Naive thymus-derived CD4-positive, alpha-beta T cell (primary cell): ENCODE measurements at regions of chr1 and their contacts with region 1.

Region 1: DNA sequence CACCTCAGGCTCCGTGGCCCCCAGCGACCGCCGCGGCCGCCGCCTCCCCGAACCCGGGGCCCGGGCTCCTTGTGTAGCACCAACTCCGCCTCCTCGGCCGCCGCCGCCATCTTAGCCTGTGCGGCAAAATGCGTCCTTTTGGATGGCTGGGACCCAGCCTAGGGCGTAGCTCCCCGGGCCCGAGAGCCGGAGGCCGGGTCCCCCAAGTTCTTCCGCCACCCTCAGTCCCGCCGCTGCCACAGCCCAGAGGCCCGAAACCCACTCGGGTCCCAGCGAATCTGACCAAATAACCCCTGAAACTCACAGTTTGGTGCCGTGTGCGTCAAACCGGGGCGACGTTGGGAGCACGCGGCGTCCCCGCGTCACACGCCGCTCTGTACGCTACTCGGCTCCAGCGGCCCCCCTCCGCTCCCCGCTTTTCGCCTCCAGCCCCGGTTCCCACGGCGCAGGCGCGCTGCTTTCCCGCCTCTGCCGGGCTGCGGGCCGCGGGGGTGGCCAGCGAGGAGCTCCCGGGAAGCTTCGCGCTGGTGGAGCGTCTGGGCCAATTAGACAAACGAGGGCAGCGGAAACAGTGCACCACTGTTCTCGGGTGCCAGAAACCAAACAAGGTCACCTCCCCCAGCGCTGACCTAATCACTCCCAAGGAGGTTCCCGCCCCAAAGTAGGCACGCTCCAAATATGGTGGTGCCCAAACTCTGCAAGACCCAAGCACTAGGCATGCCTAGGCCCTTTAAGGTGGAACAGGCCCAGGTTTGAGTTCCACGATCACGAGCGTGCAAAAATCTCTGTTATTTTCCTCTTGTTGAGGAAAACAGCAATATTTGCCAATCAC is at the start of gene ZNF644:
- DNase-seq: peak; percentile 81 to 95 (median 93)
- ATAC-seq: peak; percentile 91
- H3K4me3 ChIP-seq: peak within 1 kb of the TSS; percentile 62
- H3K4me3 Mint-ChIP-seq: peak within 1 kb of the TSS; percentile 90 to 97 (median 96)
- H3K27ac ChIP-seq: peak within 1 kb of the TSS; percentile 99
- H3K27ac Mint-ChIP-seq: peak within 1 kb of the TSS; percentile 95 to 100 (median 98)
- H3K4me1 ChIP-seq: peaks cover 37 to 45% of the 10 kb centered on the region in 2 donors
- H3K4me1 Mint-ChIP-seq: peaks cover 37 to 83% (median 68%) of the 10 kb centered on the region in 7 donors
- H3K27me3 ChIP-seq: no peaks in the 10 kb centered on the region
- H3K27me3 Mint-ChIP-seq: peaks cover 0 to 2% (median 0%) of the 10 kb centered on the region in 5 donors
- total RNA-seq, gene ZNF644: 63.5 to 117 (median 85.2) TPM

Region 2: GRCh38 chr1:89994805-89995597 is 1026.9 kb before region 1 on chr1 and contains the start of gene ZNF326:
- CTCF ChIA-PET with region 1: no interaction called
- POLR2A ChIA-PET with region 1: no interaction called
- intact Hi-C with region 1: loop called in 1 of 2 experiments (anchors 1 kb)
- DNase-seq: peak; percentile 88 to 99 (median 93)
- ATAC-seq: peak; percentile 98
- H3K4me3 ChIP-seq: peak within 1 kb of the TSS; percentile 86
- H3K4me3 Mint-ChIP-seq: peak within 1 kb of the TSS; percentile 91 to 100 (median 99)
- H3K27ac ChIP-seq: peak within 1 kb of the TSS; percentile 85
- H3K27ac Mint-ChIP-seq: peak within 1 kb of the TSS; percentile 90 to 98 (median 96)
- H3K4me1 ChIP-seq: peaks cover 8 to 14% of the 10 kb centered on the region in 2 donors
- H3K4me1 Mint-ChIP-seq: peaks cover 28 to 47% (median 43%) of the 10 kb centered on the region in 7 donors
- H3K27me3 ChIP-seq: no peaks in the 10 kb centered on the region
- H3K27me3 Mint-ChIP-seq: peaks cover 0 to 7% (median 4%) of the 10 kb centered on the region in 5 donors
- total RNA-seq, gene ZNF326: 17.3 to 52.5 (median 23.5) TPM

Region 3: GRCh38 chr1:90850898-90851710 is 170.8 kb before region 1 on chr1:
- CTCF ChIA-PET with region 1: no interaction called
- POLR2A ChIA-PET with region 1: interaction called, 4 read pairs
- intact Hi-C with region 1: loop called (anchors 1 to 2 kb)
- DNase-seq: peak; percentile 38 to 78 (median 55)
- ATAC-seq: peak; percentile 97
- H3K4me3 ChIP-seq: peak overlapping the region; percentile 69
- H3K4me3 Mint-ChIP-seq: peak overlapping the region; percentile 78 to 87 (median 84)
- H3K27ac ChIP-seq: no peak overlapping the region
- H3K27ac Mint-ChIP-seq: no peak overlapping the region
- H3K4me1 ChIP-seq: peaks cover 4% of the 10 kb centered on the region in 2 donors
- H3K4me1 Mint-ChIP-seq: peaks cover 7 to 13% (median 10%) of the 10 kb centered on the region in 7 donors
- H3K27me3 ChIP-seq: peaks cover 0 to 9% of the 10 kb centered on the region in 2 donors
- H3K27me3 Mint-ChIP-seq: peaks cover 58 to 74% (median 68%) of the 10 kb centered on the region in 5 donors

Region 4: DNA sequence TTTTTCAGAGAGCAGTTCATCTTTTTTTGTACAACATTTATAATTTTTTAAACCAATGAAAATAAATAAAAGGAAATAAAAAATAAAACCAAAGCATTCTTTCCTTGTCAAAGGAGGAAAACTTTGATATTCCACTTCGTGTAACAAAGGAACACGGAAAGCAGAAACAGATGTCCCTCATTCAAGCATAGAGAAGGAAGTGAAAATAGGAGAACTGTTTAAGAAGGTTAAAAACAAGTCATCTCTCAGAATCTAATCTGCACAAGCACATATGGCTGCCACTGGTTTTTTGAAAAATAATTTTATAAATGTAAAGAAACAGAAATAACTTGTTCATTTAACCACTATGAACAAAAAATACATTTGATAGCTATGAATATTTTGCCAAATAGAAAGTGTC is 35.9 kb after region 1 on chr1:
- CTCF ChIA-PET with region 1: no interaction called
- POLR2A ChIA-PET with region 1: no interaction called
- intact Hi-C with region 1: no loop called
- DNase-seq: no peak
- ATAC-seq: no peak
- H3K4me3 ChIP-seq: no peak overlapping the region
- H3K4me3 Mint-ChIP-seq: no peak overlapping the region
- H3K27ac ChIP-seq: no peak overlapping the region
- H3K27ac Mint-ChIP-seq: no peak overlapping the region
- H3K4me1 ChIP-seq: peaks cover 0 to 9% of the 10 kb centered on the region in 2 donors
- H3K4me1 Mint-ChIP-seq: peaks cover 0 to 2% (median 0%) of the 10 kb centered on the region in 7 donors
- H3K27me3 ChIP-seq: no peaks in the 10 kb centered on the region
- H3K27me3 Mint-ChIP-seq: peaks cover 4 to 11% (median 5%) of the 10 kb centered on the region in 5 donors

Region 5: DNA sequence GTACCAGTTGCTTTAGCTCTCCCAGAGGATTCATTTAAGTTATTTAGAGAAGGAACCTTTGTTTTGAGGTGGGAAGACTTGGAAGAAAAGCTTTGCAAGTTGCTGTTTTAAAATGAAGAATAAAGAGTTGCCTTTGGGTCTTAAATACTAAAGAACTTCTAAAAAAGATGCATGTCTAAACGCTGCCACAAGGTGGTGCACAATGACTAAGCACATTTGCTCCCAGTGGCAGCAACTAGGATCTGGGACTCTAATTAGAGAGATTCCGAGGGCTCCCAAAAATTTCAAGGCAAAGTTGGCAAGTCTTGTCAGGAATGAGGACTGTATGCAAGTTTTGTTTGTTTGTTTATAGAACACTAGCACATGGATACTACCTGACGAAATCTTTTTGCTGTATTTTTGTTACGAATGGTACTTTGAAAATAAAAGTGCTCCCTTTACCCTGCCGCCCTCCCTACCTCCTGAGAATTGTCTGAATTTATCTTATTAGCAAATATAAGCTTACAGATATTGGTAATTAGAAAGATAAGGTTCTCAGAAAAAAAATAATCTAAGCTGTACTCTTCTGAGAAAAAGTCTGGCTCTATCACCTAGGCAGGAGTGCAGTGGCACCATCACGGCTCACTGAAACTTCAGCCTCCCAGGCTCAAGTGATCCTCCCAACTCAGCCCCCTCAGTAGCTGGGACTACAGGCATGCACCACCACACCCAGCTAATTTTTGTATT is 261.0 kb after region 1 on chr1:
- CTCF ChIA-PET with region 1: no interaction called
- POLR2A ChIA-PET with region 1: no interaction called
- intact Hi-C with region 1: no loop called
- DNase-seq: peak in 8 of 9 donors; percentile 2 to 34 (median 22)
- ATAC-seq: peak; percentile 60
- H3K4me3 ChIP-seq: no peak overlapping the region
- H3K4me3 Mint-ChIP-seq: no peak overlapping the region
- H3K27ac ChIP-seq: no peak overlapping the region
- H3K27ac Mint-ChIP-seq: no peak overlapping the region
- H3K4me1 ChIP-seq: no peaks in the 10 kb centered on the region
- H3K4me1 Mint-ChIP-seq: no peaks in the 10 kb centered on the region
- H3K27me3 ChIP-seq: no peaks in the 10 kb centered on the region
- H3K27me3 Mint-ChIP-seq: peaks cover 4 to 13% (median 7%) of the 10 kb centered on the region in 5 donors

Region 6: GRCh38 chr1:91500756-91501522 is 479.0 kb after region 1 on chr1 and contains the start of gene CDC7:
- CTCF ChIA-PET with region 1: no interaction called
- POLR2A ChIA-PET with region 1: no interaction called
- intact Hi-C with region 1: loop called in 1 of 2 experiments (anchors 1 kb)
- DNase-seq: peak; percentile 67 to 86 (median 79)
- ATAC-seq: peak; percentile 85
- H3K4me3 ChIP-seq: peak within 1 kb of the TSS; percentile 97
- H3K4me3 Mint-ChIP-seq: no peak within 1 kb of the TSS
- H3K27ac ChIP-seq: peak within 1 kb of the TSS; percentile 85
- H3K27ac Mint-ChIP-seq: no peak within 1 kb of the TSS
- H3K4me1 ChIP-seq: peaks cover 0 to 11% of the 10 kb centered on the region in 2 donors
- H3K4me1 Mint-ChIP-seq: peaks cover 14 to 34% (median 18%) of the 10 kb centered on the region in 7 donors
- H3K27me3 ChIP-seq: no peaks in the 10 kb centered on the region
- H3K27me3 Mint-ChIP-seq: no peaks in the 10 kb centered on the region
- total RNA-seq, gene CDC7: 5.3 to 17.9 (median 5.9) TPM

Region 7: DNA sequence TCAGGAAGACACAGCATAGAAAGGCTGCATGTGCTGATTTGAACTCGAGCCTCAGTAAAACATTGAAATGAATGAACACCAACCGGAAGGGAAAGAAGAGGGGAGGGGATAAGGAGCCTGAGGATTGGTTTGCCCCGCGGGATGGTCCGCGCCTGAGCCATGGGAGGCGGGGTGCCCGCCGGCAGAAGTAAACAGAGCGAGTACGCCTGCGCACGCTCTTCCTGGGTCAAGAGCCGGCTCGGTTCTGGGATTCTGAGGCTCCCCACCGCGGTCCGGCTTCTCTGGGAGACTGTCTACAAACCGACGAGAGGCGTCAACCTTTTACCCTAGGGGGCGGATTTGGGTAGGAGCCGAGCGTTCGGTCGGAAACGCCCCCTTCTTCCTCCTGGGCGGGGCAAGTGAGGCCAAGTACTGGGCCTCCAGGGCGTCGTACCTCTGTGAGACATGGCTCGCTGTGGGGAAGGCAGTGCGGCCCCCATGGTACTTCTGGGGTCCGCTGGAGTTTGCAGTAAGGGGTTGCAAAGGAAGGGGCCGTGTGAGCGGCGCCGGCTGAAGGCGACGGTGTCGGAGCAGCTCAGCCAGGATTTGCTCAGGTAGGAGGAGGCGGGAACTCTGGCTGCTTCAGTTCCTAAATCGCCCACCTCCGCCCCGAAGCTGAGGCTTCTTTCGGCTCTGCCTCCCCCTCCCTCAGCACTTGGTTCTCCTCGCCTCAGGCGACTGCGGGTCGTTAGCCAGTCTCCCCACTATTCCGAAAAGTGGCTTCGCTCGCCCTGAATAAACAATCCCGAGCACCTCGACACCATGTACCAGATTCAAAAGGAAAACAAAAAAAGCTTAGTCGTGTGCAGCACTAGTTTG is 1058.5 kb after region 1 on chr1 and contains the start of gene BTBD8:
- CTCF ChIA-PET with region 1: no interaction called
- POLR2A ChIA-PET with region 1: no interaction called
- intact Hi-C with region 1: loop called in 1 of 2 experiments (anchors 2 kb)
- DNase-seq: peak; percentile 67 to 87 (median 85)
- ATAC-seq: peak; percentile 98
- H3K4me3 ChIP-seq: peak within 1 kb of the TSS; percentile 79
- H3K4me3 Mint-ChIP-seq: peak within 1 kb of the TSS; percentile 87 to 99 (median 98)
- H3K27ac ChIP-seq: peak within 1 kb of the TSS; percentile 74
- H3K27ac Mint-ChIP-seq: peak within 1 kb of the TSS; percentile 85 to 97 (median 93)
- H3K4me1 ChIP-seq: peaks cover 0 to 3% of the 10 kb centered on the region in 2 donors
- H3K4me1 Mint-ChIP-seq: peaks cover 5 to 36% (median 29%) of the 10 kb centered on the region in 7 donors
- H3K27me3 ChIP-seq: no peaks in the 10 kb centered on the region
- H3K27me3 Mint-ChIP-seq: no peaks in the 10 kb centered on the region
- total RNA-seq, gene BTBD8: 2.4 to 11.4 (median 5.3) TPM

Region 8: DNA sequence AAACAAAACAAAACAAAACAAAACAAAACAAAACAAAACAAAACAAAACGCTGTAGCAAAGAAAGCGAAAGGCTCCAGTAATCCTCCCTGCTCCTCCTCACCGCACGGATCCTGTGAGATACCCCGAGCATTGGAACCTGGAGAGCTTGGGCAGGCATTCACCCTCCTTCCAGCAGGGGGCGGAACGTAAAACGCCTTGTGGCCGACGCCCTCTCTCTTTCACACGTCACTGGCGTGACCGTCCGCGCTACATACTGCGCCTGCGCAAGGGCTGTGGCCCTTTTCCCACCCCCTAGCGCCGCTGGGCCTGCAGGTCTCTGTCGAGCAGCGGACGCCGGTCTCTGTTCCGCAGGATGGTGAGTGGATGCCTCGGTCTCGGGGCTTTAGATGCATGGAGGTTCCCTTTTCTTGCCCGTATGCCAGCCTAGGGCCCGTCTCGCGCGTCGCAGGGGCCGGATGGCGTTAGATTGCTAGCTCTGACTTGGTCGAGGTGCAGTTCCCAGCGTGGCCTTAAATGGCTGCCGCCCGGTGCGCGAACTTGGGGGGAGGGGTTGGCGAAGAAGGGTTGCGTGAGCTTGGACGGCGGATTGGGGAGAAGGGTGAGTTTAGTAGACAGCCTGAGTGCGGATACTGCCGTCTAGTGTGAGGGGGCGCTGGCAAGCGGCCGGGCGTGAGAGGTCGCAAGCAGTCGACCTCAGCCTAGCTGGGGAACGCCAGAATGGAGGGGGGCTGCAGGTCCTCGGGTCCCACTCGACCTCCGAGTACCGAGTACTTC is 1810.0 kb after region 1 on chr1 and contains the start of gene RPL5:
- CTCF ChIA-PET with region 1: no interaction called
- POLR2A ChIA-PET with region 1: no interaction called
- intact Hi-C with region 1: loop called in 1 of 2 experiments (anchors 5 kb)
- DNase-seq: peak; percentile 94 to 99 (median 98)
- ATAC-seq: peak; percentile 95
- H3K4me3 ChIP-seq: peak within 1 kb of the TSS; percentile 94
- H3K4me3 Mint-ChIP-seq: peak within 1 kb of the TSS; percentile 94 to 100 (median 98)
- H3K27ac ChIP-seq: peak within 1 kb of the TSS; percentile 94
- H3K27ac Mint-ChIP-seq: peak within 1 kb of the TSS; percentile 98 to 100 (median 99)
- H3K4me1 ChIP-seq: peaks cover 16 to 30% of the 10 kb centered on the region in 2 donors
- H3K4me1 Mint-ChIP-seq: peaks cover 29 to 54% (median 44%) of the 10 kb centered on the region in 7 donors
- H3K27me3 ChIP-seq: no peaks in the 10 kb centered on the region
- H3K27me3 Mint-ChIP-seq: peaks cover 0 to 5% (median 0%) of the 10 kb centered on the region in 5 donors
- total RNA-seq, gene RPL5: 764 to 1,693 (median 1,596) TPM